CD14-positive monocyte (primary cell): ENCODE measurements at regions of chr14 and their contacts with region 1.

Region 1: GRCh38 chr14:103576371-103577024 is 13.7 kb downstream of the COA8 start:
- DNase-seq: no peak
- H3K4me3 ChIP-seq: no peak overlapping the region
- H3K4me3 Mint-ChIP-seq: no peak overlapping the region
- H3K27ac ChIP-seq: no peak overlapping the region
- H3K27ac Mint-ChIP-seq: peak overlapping the region in 4 of 7 donors; percentile 8 to 72 (median 28)
- H3K4me1 ChIP-seq: no peaks in the 10 kb centered on the region
- H3K4me1 Mint-ChIP-seq: no peaks in the 10 kb centered on the region
- H3K27me3 ChIP-seq: no peaks in the 10 kb centered on the region
- H3K27me3 Mint-ChIP-seq: no peaks in the 10 kb centered on the region
- CTCF ChIP-seq: no peak

Region 2: DNA sequence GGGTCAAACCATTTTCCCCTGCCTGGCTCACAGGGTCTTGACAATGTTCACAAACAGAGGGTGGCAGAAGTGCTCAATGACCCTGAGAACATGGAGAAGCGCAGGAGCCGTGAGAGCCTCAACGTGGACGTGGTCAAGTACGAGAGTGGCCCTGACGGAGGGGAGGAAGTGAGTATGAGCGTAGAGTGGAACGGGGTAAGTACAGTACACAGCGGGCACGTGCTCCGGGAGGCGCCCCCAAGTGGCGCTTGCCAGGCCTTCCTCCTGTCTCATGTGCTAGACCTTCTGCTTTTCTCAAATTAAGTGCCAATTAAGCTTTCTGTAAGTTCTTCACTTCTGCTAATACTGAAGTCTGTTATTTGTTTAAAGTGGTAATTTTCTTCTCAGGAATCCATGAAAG is 102.9 kb after region 1 on chr14:
- intact Hi-C with region 1: loop called (anchors 5 to 10 kb)
- DNase-seq: peak; percentile 54 to 69 (median 54)
- H3K4me3 ChIP-seq: no peak overlapping the region
- H3K4me3 Mint-ChIP-seq: no peak overlapping the region
- H3K27ac ChIP-seq: peak overlapping the region in 1 of 2 donors; percentile 1
- H3K27ac Mint-ChIP-seq: peak overlapping the region in 6 of 7 donors; percentile 4 to 84 (median 60)
- H3K4me1 ChIP-seq: no peaks in the 10 kb centered on the region
- H3K4me1 Mint-ChIP-seq: peaks cover 4% of the 10 kb centered on the region
- H3K27me3 ChIP-seq: no peaks in the 10 kb centered on the region
- H3K27me3 Mint-ChIP-seq: peaks cover 0 to 2% (median 0%) of the 10 kb centered on the region in 3 donors
- CTCF ChIP-seq: peak; percentile 72

Region 3: GRCh38 chr14:103688906-103689902 is 112.7 kb after region 1 on chr14:
- intact Hi-C with region 1: loop called in 1 of 2 experiments (anchors 10 kb)
- DNase-seq: no peak
- H3K4me3 ChIP-seq: no peak overlapping the region
- H3K4me3 Mint-ChIP-seq: no peak overlapping the region
- H3K27ac ChIP-seq: no peak overlapping the region
- H3K27ac Mint-ChIP-seq: no peak overlapping the region
- H3K4me1 ChIP-seq: no peaks in the 10 kb centered on the region
- H3K4me1 Mint-ChIP-seq: no peaks in the 10 kb centered on the region
- H3K27me3 ChIP-seq: no peaks in the 10 kb centered on the region
- H3K27me3 Mint-ChIP-seq: peaks cover 0 to 1% (median 0%) of the 10 kb centered on the region in 3 donors
- CTCF ChIP-seq: no peak